Activated CD4-positive, alpha-beta T cell treated with anti-CD3 and anti-CD28 coated beads, Interleukin-2, amount 10 ng/mL, durations not matched to agents 24 days and 14 days (primary cell): ENCODE measurements at regions of chr6 and their contacts with region 1.

Region 1: DNA sequence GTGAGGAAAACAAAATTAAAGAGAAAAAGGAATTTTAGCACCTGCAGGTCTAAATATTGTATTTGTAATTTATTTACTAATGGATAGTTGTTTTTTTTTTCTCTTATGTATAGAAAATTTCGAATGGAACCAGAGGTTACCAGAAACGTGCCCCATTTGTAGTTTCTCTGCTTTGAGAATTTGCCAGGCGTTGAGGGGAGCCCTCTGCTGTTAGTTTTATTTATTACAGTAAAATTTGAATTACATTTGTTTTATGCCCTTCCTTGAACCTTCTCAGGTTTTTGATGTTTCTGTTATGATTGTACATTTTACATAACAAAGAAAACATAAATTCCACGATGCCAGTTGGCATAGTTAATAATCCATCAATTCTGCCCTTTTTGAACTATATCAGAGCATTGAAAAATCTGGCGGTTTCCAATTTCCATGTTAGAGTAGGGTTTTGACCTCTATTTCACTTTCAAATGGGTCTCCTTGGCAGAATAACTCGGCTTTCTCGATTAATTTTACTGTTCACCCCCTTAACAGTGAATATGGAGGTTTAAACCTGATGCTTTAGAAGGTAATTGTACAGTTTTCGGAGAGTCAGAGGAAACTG is 35.1 kb upstream of the RFPL4B start:
- DNase-seq: peak; percentile 69
- H3K4me3 Mint-ChIP-seq: no peak overlapping the region
- H3K27ac Mint-ChIP-seq: no peak overlapping the region
- H3K4me1 Mint-ChIP-seq: no peaks in the 10 kb centered on the region
- H3K27me3 Mint-ChIP-seq: peaks cover 34% of the 10 kb centered on the region

Region 2: GRCh38 chr6:112180095-112180820 is 131.8 kb before region 1 on chr6:
- intact Hi-C with region 1: loop called (anchors 1 kb)
- DNase-seq: peak; percentile 86
- H3K4me3 Mint-ChIP-seq: no peak overlapping the region
- H3K27ac Mint-ChIP-seq: no peak overlapping the region
- H3K4me1 Mint-ChIP-seq: no peaks in the 10 kb centered on the region
- H3K27me3 Mint-ChIP-seq: peaks cover 41% of the 10 kb centered on the region